ENCODE measurements at regions of chr2 and their contacts with region 1.

Region 1: DNA sequence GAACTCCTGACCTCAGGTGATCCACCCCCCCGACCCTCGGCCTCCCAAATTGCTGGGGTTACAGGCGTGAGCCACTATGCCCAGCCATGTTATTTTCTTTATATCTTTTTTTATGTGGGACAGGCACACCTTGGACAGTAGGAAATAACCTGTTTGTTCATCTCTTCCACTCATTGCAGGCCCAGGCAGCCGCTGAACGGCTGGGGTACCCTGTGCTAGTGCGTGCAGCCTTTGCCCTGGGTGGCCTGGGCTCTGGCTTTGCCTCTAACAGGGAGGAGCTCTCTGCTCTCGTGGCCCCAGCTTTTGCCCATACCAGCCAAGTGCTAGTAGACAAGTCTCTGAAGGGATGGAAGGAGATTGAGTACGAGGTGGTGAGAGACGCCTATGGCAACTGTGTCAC is 8.4 kb downstream of the CAD start:
- DNase-seq: no peak
- H3K4me3 ChIP-seq: no peak overlapping the region
- H3K27ac ChIP-seq: no peak overlapping the region
- H3K4me1 ChIP-seq: no peaks in the 10 kb centered on the region
- H3K27me3 ChIP-seq: no peaks in the 10 kb centered on the region
- CTCF ChIP-seq: no peak
- EP300 ChIP-seq: no peak
- POLR2A ChIP-seq: no peak
- RAD21 ChIP-seq: no peak

Region 2: DNA sequence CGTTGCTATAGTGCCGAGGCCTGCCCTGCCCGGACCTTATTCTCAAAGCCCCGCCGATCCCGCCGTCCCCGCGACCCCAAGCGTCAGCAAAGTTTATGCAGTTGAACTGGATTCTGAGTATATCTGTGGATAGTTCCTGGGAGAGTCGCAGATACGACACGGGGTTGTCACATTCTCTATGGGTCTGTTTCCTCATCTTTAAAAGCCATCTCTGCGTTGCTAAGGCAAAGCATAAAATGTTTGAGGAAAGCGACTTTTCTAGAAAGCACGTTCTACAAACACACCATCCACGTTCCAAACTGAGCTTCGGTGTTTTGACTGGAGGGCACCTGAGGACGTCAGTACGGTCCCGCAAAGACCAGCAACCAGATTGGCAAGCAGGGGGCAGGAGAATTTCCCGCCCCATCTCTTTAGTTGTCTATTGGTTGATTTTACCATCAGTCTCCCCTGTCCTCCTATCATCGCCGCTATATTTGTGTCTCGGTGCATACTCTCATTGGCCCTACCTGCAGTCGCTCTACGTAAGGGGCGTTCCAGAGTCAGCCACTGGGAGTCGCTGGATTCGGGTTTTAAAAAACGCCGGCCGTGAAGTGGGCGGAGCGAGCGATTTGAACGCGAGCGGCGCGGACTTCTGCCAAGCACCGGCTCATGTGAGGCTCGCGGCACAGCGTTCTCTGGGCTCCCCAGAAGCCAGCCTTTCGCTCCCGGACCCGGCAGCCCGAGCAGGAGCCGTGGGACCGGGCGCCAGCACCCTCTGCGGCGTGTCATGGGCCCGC is 439.9 kb before region 1 on chr2 and contains the start of gene CENPA:
- CTCF ChIA-PET with region 1: no interaction called
- POLR2A ChIA-PET with region 1: no interaction called
- DNase-seq: peak; percentile 93 to 96
- H3K4me3 ChIP-seq: peak within 1 kb of the TSS; percentile 71 to 87 (median 74)
- H3K27ac ChIP-seq: no peak within 1 kb of the TSS
- H3K4me1 ChIP-seq: peaks cover 0 to 1% (median 0%) of the 10 kb centered on the region in 4 experiments; a peak in 2 of 7 replicates
- H3K27me3 ChIP-seq: peaks cover 0 to 5% (median 4%) of the 10 kb centered on the region in 4 experiments; a peak in 2 of 7 replicates
- CTCF ChIP-seq: 0 out of 4 replicates have a peak, but pooled peaks of 1 of the 3 experiments have one; percentile 6
- EP300 ChIP-seq: no peak
- POLR2A ChIP-seq: peak; percentile 57 to 81
- RAD21 ChIP-seq: no peak
- total RNA-seq, gene CENPA: 28.5 and 30.9 TPM in 2 replicates

Region 3: DNA sequence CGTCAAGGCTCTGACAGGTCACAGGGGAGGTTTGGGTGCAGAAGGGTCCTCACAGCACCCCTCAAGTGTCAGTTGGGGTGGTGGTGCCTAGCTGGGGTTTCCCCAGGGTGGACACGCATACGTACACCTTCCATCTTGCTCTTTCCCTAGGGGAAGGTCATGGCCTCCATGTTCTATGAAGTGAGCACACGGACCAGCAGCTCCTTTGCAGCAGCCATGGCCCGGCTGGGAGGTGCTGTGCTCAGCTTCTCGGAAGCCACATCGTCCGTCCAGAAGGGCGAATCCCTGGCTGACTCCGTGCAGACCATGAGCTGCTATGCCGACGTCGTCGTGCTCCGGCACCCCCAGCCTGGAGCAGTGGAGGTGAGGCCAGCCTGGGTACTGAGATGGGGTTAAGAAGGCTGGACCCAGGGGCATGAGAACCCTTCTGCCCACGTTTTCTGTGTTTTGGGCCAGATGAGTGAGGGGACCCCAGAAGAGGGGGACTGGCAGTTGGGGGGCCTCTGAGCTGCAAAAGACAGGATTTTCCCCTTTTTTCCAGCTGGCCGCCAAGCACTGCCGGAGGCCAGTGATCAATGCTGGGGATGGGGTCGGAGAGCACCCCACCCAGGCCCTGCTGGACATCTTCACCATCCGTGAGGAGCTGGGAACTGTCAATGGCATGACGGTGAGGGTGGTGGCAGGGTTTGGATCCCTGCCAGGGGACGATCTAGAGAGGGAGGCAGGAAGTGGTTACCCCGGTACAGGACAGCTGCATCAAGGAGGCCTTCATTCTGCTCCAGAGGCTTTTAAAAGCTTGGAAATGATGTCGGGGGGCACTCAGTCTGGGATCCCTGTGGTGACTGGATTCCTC is 16.5 kb after region 1 on chr2:
- CTCF ChIA-PET with region 1: interaction called, 10 read pairs
- POLR2A ChIA-PET with region 1: interaction called, 835 read pairs
- DNase-seq: no peak
- H3K4me3 ChIP-seq: no peak overlapping the region
- H3K27ac ChIP-seq: no peak overlapping the region
- H3K4me1 ChIP-seq: no peaks in the 10 kb centered on the region
- H3K27me3 ChIP-seq: no peaks in the 10 kb centered on the region
- CTCF ChIP-seq: no peak
- EP300 ChIP-seq: no peak
- POLR2A ChIP-seq: no peak
- RAD21 ChIP-seq: no peak

Measured in H1 (cell line).